Endothelial cell of umbilical vein (primary cell): ENCODE measurements at regions of chr4 and their contacts with region 1.

Region 1: DNA sequence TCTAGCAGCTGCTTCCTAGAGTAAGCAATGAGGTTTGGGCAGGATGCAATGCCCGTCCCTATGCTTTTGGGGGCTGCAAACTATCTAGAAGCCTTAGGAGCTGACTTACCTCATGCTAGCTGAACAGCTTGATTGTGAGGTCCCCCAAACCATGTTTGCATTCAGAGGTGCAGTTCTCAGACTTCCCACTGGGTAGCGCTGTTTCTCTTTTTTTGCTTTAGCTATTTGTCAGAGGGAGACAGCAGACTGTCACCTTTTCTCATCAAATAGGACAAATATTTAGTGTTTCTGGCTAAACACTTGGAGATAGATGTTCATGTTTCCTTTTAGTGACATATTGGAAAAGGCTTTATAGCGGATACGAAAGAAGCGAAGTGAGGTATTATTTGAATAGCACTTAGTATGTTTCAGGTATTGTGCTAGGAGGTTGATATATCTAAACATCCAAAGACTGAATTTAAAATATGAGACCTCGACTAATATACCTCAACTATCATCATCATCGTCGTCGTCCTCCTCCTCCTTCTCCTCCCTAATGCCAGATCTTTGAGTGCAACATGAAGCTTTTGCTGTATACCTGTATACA is 18.7 kb upstream of the TMEM192 start:
- DNase-seq: peak; percentile 73
- H3K4me3 ChIP-seq: no peak overlapping the region
- H3K27ac ChIP-seq: no peak overlapping the region
- H3K4me1 ChIP-seq: no peaks in the 10 kb centered on the region
- H3K27me3 ChIP-seq: peaks cover 5 to 12% of the 10 kb centered on the region in 2 experiments
- CTCF ChIP-seq: peak; percentile 81 to 84
- POLR2A ChIP-seq: no peak

Region 2: DNA sequence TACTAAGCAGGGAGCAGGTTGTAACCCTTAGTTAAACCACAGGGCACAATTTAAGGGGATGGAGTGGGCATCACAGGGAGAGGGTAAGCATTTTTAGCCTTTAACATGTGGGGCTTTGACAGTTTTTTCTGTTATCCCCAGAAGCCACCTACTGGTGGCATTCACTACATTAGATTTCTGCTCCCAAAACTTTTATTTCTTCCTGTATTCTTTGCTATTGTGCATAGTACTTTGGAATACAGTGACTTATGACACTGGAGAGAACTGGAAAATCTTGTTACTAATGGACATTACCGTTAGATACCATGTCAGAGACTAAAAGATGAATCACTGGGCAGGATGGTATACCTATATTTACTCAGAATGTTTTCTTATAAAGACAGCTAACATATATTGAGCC is 70.4 kb before region 1 on chr4:
- CTCF ChIA-PET with region 1: no interaction called
- POLR2A ChIA-PET with region 1: no interaction called
- dilution Hi-C with region 1: no loop called
- intact Hi-C with region 1: no loop called
- DNase-seq: no peak
- H3K4me3 ChIP-seq: no peak overlapping the region
- H3K27ac ChIP-seq: no peak overlapping the region
- H3K4me1 ChIP-seq: no peaks in the 10 kb centered on the region
- H3K27me3 ChIP-seq: no peaks in the 10 kb centered on the region
- CTCF ChIP-seq: no peak
- POLR2A ChIP-seq: no peak

Region 3: DNA sequence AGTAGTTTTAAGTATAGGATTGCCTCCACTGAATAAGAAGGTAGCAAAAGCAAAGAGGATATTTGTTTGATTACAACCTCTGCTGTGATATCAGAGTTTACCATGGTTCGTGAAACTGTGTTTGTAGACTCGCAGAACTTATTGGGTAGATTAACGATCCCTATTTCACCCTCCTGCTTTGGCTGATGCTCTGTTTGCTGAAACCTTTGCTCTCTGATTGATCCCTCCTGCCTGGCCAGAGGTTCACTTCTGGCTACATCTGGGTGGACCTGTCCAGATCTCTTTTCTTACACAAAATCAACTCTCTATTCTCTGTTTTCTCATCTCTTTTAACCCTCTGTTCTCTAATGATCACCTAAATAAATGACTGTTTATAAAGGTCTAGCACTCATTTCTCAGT is 19.2 kb after region 1 on chr4:
- CTCF ChIA-PET with region 1: interaction called, 10 read pairs
- POLR2A ChIA-PET with region 1: no interaction called
- dilution Hi-C with region 1: no loop called
- intact Hi-C with region 1: no loop called
- DNase-seq: no peak
- H3K4me3 ChIP-seq: no peak overlapping the region
- H3K27ac ChIP-seq: no peak overlapping the region
- H3K4me1 ChIP-seq: no peaks in the 10 kb centered on the region
- H3K27me3 ChIP-seq: no peaks in the 10 kb centered on the region
- CTCF ChIP-seq: no peak
- POLR2A ChIP-seq: no peak

Region 4: GRCh38 chr4:165343353-165344191 is 212.2 kb after region 1 on chr4:
- CTCF ChIA-PET with region 1: interaction called, 347 read pairs
- POLR2A ChIA-PET with region 1: interaction called, 3 read pairs
- dilution Hi-C with region 1: no loop called
- intact Hi-C with region 1: loop called (anchors 1 kb)
- DNase-seq: peak; percentile 53
- H3K4me3 ChIP-seq: no peak overlapping the region
- H3K27ac ChIP-seq: no peak overlapping the region
- H3K4me1 ChIP-seq: no peaks in the 10 kb centered on the region
- H3K27me3 ChIP-seq: peaks cover 0 to under 1% of the 10 kb centered on the region in 2 experiments
- CTCF ChIP-seq: peak in 1 of 2 donors; percentile 20
- POLR2A ChIP-seq: no peak

Region 5: DNA sequence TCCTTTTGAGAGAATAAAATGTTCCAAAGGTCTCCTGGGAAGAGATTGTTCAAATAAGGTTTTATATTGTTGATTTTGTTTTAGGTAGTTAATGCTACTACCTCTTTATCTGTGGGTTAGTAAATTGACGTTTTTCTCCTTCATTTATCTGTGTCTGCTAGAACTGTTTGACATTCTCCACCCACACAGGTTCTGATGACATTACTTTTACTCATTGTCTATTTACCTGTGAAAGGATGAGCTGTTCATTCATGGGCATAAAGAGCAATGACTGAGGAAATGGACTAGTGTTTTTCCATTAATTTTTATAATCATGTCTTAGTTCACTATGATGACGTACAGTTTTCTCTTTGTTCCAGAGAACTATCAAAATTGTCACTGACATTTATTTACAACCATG is 323.1 kb after region 1 on chr4:
- CTCF ChIA-PET with region 1: interaction called, 15 read pairs
- POLR2A ChIA-PET with region 1: no interaction called
- dilution Hi-C with region 1: no loop called
- intact Hi-C with region 1: no loop called
- DNase-seq: no peak
- H3K4me3 ChIP-seq: no peak overlapping the region
- H3K27ac ChIP-seq: no peak overlapping the region
- H3K4me1 ChIP-seq: no peaks in the 10 kb centered on the region
- H3K27me3 ChIP-seq: no peaks in the 10 kb centered on the region
- CTCF ChIP-seq: no peak
- POLR2A ChIP-seq: no peak

Region 6: DNA sequence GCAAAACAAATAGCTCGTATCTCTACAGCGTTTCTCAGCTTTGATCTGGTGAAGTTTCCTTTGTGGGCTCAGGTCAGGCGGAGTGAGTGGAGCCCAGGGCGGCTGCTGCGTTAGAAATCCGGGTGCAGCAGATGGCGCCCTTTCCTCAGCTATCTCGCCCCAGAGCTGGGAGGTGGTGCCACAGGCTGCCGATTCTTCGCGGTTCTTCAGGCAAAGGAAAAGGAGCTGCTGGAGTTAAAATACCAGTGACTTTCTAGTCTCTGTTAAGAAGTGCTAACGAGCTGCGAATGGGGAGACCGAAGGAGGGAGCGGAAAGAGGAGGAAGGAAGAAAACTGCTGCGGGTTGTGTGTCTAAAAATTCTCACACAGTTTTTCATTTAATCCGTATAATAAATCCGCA is 362.0 kb after region 1 on chr4:
- CTCF ChIA-PET with region 1: interaction called, 16 read pairs
- POLR2A ChIA-PET with region 1: no interaction called
- dilution Hi-C with region 1: no loop called
- intact Hi-C with region 1: no loop called
- DNase-seq: peak; percentile 64
- H3K4me3 ChIP-seq: peak overlapping the region in 1 of 3 experiments; percentile 31
- H3K27ac ChIP-seq: no peak overlapping the region
- H3K4me1 ChIP-seq: peaks cover 3% of the 10 kb centered on the region
- H3K27me3 ChIP-seq: no peaks in the 10 kb centered on the region
- CTCF ChIP-seq: peak; percentile 71 to 81
- POLR2A ChIP-seq: no peak